K562 (cell line): ENCODE measurements at regions of chr1 and their contacts with region 1.

Region 1: GRCh38 chr1:24830680-24831272 is 85.5 kb downstream of the CLIC4 start:
- DNase-seq: peak; percentile 52 to 68 (median 54)
- ATAC-seq: peak; percentile 86
- H3K4me3 ChIP-seq: no peak overlapping the region
- H3K27ac ChIP-seq: no peak overlapping the region
- H3K4me1 ChIP-seq: no peaks in the 10 kb centered on the region
- H3K27me3 ChIP-seq: no peaks in the 10 kb centered on the region
- CTCF ChIP-seq: peak; percentile 53 to 96 (median 72); a peak in 5 of 6 replicates
- EP300 ChIP-seq: no peak
- POLR2A ChIP-seq: no peak
- RAD21 ChIP-seq: peak; percentile 92 to 96

Region 2: GRCh38 chr1:24201941-24202440 is 628.8 kb before region 1 on chr1:
- CTCF ChIA-PET with region 1: interaction called, 19 read pairs
- POLR2A ChIA-PET with region 1: no interaction called
- in situ Hi-C with region 1: no loop called
- intact Hi-C with region 1: no loop called
- DNase-seq: peak; percentile 63 to 80 (median 69)
- ATAC-seq: peak; percentile 78
- H3K4me3 ChIP-seq: no peak overlapping the region
- H3K27ac ChIP-seq: no peak overlapping the region
- H3K4me1 ChIP-seq: no peaks in the 10 kb centered on the region; a peak in 1 of 5 replicates
- H3K27me3 ChIP-seq: peaks cover 16 to 43% of the 10 kb centered on the region in 2 experiments; a peak in 4 of 5 replicates
- CTCF ChIP-seq: peak; percentile 83 to 94 (median 94)
- EP300 ChIP-seq: no peak
- POLR2A ChIP-seq: no peak
- RAD21 ChIP-seq: peak; percentile 93 to 99

Region 3: GRCh38 chr1:24541711-24542346 is 288.9 kb before region 1 on chr1:
- CTCF ChIA-PET with region 1: interaction called, 4 read pairs
- POLR2A ChIA-PET with region 1: no interaction called
- in situ Hi-C with region 1: no loop called
- intact Hi-C with region 1: loop called (anchors 5 kb)
- DNase-seq: peak in 2 of 4 experiments; percentile 40 to 51
- ATAC-seq: peak; percentile 81
- H3K4me3 ChIP-seq: no peak overlapping the region
- H3K27ac ChIP-seq: no peak overlapping the region
- H3K4me1 ChIP-seq: peaks cover 1 to 3% of the 10 kb centered on the region in 2 experiments; a peak in 2 of 5 replicates
- H3K27me3 ChIP-seq: peaks cover 10 to 24% of the 10 kb centered on the region in 2 experiments; a peak in 4 of 5 replicates
- CTCF ChIP-seq: peak; percentile 74 to 82 (median 79)
- EP300 ChIP-seq: no peak
- POLR2A ChIP-seq: no peak
- RAD21 ChIP-seq: peak; percentile 51 to 80

Region 4: DNA sequence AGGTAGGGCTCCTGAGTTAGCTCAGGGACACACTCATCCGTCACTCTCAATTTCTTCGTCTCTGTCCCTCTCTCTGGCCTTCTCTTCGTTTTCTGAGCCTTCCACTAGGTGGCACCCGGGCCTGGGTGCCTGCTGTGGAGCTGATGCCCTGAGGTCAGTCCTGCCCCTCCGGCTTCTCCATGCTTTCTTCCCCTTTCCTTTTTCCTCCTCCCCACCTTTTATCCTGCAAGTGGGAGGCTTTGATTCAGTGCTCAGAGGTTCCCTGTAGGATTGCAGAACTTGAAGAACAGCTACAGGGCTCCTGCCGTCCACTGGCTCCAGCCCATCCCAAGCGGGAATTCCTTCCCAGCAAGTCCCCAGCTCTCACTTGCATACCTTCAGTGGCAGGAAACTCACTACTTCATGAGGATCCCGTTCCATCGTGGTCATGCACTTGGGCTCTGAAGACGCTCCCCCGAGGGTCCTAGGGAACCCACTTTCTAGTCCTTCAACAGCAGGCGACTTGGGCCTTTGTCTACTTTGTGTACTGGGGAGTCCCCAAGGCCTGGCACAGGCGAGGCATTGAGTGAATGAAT is 142.1 kb before region 1 on chr1:
- CTCF ChIA-PET with region 1: interaction called, 51 read pairs
- POLR2A ChIA-PET with region 1: interaction called, 4 read pairs
- in situ Hi-C with region 1: loop called (anchors 5 kb)
- intact Hi-C with region 1: loop called (anchors 2 kb)
- DNase-seq: peak; percentile 69 to 81 (median 75)
- ATAC-seq: peak; percentile 96
- H3K4me3 ChIP-seq: no peak overlapping the region
- H3K27ac ChIP-seq: no peak overlapping the region
- H3K4me1 ChIP-seq: peaks cover 0 to 6% of the 10 kb centered on the region in 2 experiments; a peak in 3 of 5 replicates
- H3K27me3 ChIP-seq: no peaks in the 10 kb centered on the region; a peak in 2 of 5 replicates
- CTCF ChIP-seq: peak; percentile 90 to 97 (median 96)
- EP300 ChIP-seq: peak; percentile 15; the same call in 1 of the 2 replicates
- POLR2A ChIP-seq: no peak
- RAD21 ChIP-seq: peak; percentile 95 to 99